ENCODE measurements at regions of chr11 and their contacts with region 1.

Region 1: DNA sequence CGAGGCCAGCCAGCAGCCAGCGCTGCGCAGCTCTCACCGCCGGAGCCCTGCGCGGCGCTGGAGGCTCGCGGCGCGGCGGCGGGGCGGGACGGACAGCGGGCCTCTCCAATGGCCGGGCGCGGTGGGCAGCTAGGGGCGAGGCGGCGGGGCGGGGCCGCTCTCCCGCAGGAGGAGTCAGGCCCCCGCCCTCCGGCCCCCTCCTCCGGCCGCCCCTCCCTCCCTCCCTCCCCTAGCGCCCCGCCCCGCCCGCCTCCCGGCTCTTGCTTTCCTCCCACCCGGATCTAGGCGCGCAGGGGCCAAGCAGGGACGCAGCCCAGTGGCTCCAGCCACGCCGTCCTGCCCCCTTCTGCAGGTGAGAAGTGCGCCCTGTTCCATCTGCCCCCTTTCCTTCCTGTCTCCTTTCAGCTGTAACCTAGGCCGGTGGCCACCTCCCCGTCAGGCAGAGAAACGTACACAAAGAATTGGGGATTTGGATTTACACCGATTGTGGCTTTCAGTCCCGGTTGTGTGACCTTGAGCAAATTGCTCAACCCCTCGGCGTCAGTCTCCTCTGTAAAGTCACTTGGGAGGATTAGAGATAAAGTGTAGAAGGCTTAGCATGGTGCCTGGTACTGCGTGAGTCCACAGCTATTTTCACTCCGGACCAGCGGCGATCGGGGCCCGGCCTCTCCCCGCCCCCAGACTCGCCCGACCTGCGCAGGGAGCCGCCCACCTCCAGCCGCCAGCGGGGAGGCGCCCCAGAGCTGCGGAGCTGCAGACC is at the start of gene FZD4:
- DNase-seq: peak; percentile 90
- H3K4me3 ChIP-seq: peak within 1 kb of the TSS; percentile 85 to 91
- H3K27ac ChIP-seq: peak within 1 kb of the TSS; percentile 87 to 89
- H3K4me1 ChIP-seq: no peaks in the 10 kb centered on the region
- H3K27me3 ChIP-seq: no peaks in the 10 kb centered on the region
- CTCF ChIP-seq: peak; percentile 35 to 67 (median 42)
- POLR2A ChIP-seq: peak; percentile 13
- total RNA-seq, gene FZD4: 34.3 to 38.3 TPM

Region 2: GRCh38 chr11:87037450-87038234 is 82.1 kb after region 1 on chr11 and contains the start of gene TMEM135:
- intact Hi-C with region 1: loop called (anchors 2 kb)
- DNase-seq: peak; percentile 86
- H3K4me3 ChIP-seq: peak within 1 kb of the TSS; percentile 70 to 78
- H3K27ac ChIP-seq: peak within 1 kb of the TSS; percentile 86 to 88
- H3K4me1 ChIP-seq: peaks cover 3% of the 10 kb centered on the region
- H3K27me3 ChIP-seq: no peaks in the 10 kb centered on the region
- CTCF ChIP-seq: no peak
- POLR2A ChIP-seq: peak; percentile 61
- total RNA-seq, gene TMEM135: 22.3 to 42.1 TPM

Region 3: DNA sequence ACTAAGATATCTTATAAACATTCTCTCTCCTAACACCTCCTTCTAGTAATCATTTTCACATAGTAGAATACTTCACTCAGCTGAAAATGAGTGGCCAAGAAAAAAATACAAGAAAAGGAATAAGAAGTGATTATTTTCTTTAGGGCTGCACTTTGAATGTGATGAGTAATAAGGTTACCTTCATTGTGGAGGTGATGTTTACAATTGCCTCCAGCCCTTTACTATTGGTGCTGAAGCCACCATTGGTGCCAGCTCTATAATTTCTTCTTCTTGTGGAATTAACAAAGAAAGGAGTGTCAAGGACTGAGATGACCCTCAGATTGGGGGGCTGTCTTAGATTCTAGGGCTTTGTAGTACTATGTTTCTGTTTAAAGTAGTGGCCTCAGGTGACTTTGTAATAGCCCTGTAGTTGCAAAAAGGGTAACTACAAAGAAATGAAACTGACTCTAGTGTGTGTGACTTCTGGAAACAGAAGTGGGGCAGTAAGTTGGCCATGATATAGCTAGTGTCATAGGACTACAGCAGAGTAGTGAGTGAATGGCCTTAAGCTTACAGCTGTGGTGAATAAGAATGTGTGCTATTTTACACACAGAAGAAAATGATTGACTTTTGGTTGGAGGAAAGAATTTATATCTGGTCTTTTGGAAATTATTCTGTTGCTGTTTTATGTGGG is 369.4 kb after region 1 on chr11:
- intact Hi-C with region 1: no loop called
- DNase-seq: no peak
- H3K4me3 ChIP-seq: no peak overlapping the region
- H3K27ac ChIP-seq: no peak overlapping the region
- H3K4me1 ChIP-seq: no peaks in the 10 kb centered on the region
- H3K27me3 ChIP-seq: no peaks in the 10 kb centered on the region
- CTCF ChIP-seq: no peak
- POLR2A ChIP-seq: no peak

Measured in prostate gland (tissue), 2 donors.